ENCODE measurements at regions of chr5 and their contacts with region 1.

Region 1: DNA sequence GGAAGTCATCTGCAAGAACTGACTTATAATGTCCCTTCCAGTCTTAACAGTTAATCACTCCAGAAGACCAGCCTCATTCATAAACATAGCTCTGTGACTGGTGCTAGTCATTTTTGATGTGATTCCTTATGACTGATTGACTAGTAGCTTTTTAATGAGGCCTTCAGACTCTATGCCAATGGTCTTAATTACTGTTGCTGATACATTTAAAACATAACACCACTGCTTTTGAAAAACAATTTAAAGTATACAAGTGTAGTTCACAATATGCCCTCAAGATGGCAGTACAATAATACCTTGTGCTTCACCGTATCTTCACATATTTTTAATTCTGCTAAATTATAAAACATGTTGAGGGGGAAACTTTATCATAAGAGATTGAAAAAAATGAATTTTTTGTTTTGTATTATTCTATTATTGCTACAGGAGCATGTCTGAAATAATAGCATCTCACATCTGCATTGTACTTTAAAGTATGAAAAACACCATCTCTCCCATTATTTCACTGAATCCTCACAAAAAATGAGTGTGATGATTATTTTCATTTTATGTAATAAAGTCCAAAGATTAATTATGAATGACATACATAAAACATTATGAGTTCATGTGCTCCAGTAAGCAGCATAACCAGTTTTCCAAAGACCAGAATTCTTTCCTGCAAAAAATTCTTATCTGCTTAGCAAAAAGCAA is 55.2 kb upstream of the SHISAL2B start:
- DNase-seq: no peak
- H3K4me3 ChIP-seq: no peak overlapping the region
- H3K27ac ChIP-seq: no peak overlapping the region
- H3K4me1 ChIP-seq: no peaks in the 10 kb centered on the region
- H3K27me3 ChIP-seq: no peaks in the 10 kb centered on the region
- CTCF ChIP-seq: peak; percentile 59 to 94 (median 63)
- POLR2A ChIP-seq: no peak

Region 2: DNA sequence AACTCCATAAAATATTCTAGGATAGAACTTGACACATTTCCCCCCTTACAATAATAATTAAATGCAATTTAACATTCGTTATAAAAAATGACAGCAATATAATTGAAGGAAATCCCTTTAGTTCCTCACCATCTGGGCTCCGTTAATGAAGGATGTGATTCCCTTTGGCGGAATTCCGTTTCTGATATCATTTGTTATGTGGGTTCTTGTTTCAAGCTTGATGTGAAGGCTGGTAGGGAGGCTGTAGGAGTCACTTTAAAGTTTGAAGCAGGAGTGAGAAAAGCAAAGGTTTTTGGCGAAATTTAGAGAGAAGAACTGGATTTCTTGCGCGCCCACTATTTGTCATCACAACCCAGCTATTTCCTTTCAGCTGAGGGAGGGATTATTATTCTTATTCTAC is 125.3 kb before region 1 on chr5:
- intact Hi-C with region 1: no loop called
- DNase-seq: no peak
- H3K4me3 ChIP-seq: no peak overlapping the region
- H3K27ac ChIP-seq: no peak overlapping the region
- H3K4me1 ChIP-seq: no peaks in the 10 kb centered on the region
- H3K27me3 ChIP-seq: no peaks in the 10 kb centered on the region
- CTCF ChIP-seq: no peak
- POLR2A ChIP-seq: no peak

Region 3: DNA sequence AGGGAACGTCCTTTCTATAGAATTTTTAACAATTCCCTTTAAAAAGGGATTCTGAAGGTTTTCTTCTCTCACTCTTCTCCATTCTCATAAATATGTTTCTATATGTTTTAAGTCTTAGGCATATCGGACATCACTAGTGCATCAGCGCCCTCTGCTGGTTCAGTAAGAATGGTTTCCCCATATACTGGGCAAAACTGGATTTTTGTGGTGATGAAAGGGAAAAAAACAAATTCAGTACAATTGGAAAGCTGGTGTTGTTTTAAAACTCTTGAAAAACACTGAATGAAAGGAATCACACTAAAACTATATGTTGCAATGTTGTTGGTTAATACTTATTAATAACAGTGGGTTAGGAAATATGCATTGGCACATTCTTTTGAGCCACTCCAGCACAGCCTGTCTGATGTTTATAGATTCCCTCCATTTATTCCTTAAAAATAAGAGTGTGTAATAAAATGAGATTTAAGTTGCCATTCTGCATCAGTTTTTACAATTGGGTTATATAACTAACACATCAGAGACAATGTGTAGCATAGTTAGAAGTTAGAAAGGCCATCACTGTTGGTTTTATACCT is 149.4 kb after region 1 on chr5:
- intact Hi-C with region 1: loop called (anchors 10 kb)
- DNase-seq: peak; percentile 90
- H3K4me3 ChIP-seq: no peak overlapping the region
- H3K27ac ChIP-seq: no peak overlapping the region
- H3K4me1 ChIP-seq: no peaks in the 10 kb centered on the region
- H3K27me3 ChIP-seq: no peaks in the 10 kb centered on the region
- CTCF ChIP-seq: peak; percentile 72 to 86 (median 79)
- POLR2A ChIP-seq: no peak